K562 (cell line): ENCODE measurements at regions of chr3 and their contacts with region 1.

Region 1: GRCh38 chr3:8622873-8623691 is 21.5 kb downstream of the SSUH2 start:
- DNase-seq: peak; percentile 77 to 87 (median 85)
- ATAC-seq: peak; percentile 98
- H3K4me3 ChIP-seq: no peak overlapping the region
- H3K27ac ChIP-seq: no peak overlapping the region
- H3K4me1 ChIP-seq: peaks cover 0 to 3% of the 10 kb centered on the region in 2 experiments; a peak in 3 of 5 replicates
- H3K27me3 ChIP-seq: peaks cover 0 to 28% of the 10 kb centered on the region in 2 experiments; a peak in 2 of 5 replicates
- CTCF ChIP-seq: peak; percentile 88 to 92 (median 89)
- EP300 ChIP-seq: no peak
- POLR2A ChIP-seq: no peak
- RAD21 ChIP-seq: peak; percentile 88 to 91

Region 2: DNA sequence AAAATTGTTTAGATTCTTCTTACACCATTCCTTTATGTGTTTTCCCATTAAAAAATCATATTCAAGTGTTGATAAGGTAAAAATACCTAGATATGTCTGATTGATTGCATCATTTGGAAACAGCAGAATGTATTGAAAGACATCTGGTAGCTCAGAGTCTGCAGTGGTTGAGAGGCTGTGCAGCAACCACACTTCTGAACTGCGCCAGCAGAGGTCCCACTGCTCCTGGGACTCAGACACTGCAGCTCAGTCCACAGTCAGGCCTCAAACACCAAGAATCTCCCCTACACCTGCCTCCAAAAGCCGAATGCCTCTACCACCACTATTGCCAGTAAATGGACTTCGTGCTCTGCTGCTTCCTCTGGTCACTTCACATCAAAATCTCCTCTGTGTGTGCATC is 298.3 kb before region 1 on chr3:
- CTCF ChIA-PET with region 1: no interaction called
- POLR2A ChIA-PET with region 1: no interaction called
- in situ Hi-C with region 1: no loop called
- intact Hi-C with region 1: loop called (anchors 10 kb)
- DNase-seq: no peak
- ATAC-seq: peak; percentile 59; the same call in 2 of the 3 replicates
- H3K4me3 ChIP-seq: no peak overlapping the region
- H3K27ac ChIP-seq: no peak overlapping the region
- H3K4me1 ChIP-seq: no peaks in the 10 kb centered on the region
- H3K27me3 ChIP-seq: no peaks in the 10 kb centered on the region
- CTCF ChIP-seq: 0 out of 6 replicates have a peak, but pooled peaks of 1 of the 3 experiments have one; percentile 27
- EP300 ChIP-seq: no peak
- POLR2A ChIP-seq: no peak
- RAD21 ChIP-seq: peak; percentile 80 to 90

Region 3: GRCh38 chr3:8441969-8442559 is 181.0 kb before region 1 on chr3:
- CTCF ChIA-PET with region 1: interaction called, 12 read pairs
- POLR2A ChIA-PET with region 1: no interaction called
- in situ Hi-C with region 1: no loop called
- intact Hi-C with region 1: loop called (anchors 1 kb)
- DNase-seq: peak; percentile 36 to 53 (median 44)
- ATAC-seq: peak; percentile 78
- H3K4me3 ChIP-seq: no peak overlapping the region
- H3K27ac ChIP-seq: no peak overlapping the region
- H3K4me1 ChIP-seq: no peaks in the 10 kb centered on the region
- H3K27me3 ChIP-seq: peaks cover 0 to 4% of the 10 kb centered on the region in 2 experiments; a peak in 1 of 5 replicates
- CTCF ChIP-seq: peak; percentile 49 to 68 (median 68)
- EP300 ChIP-seq: no peak
- POLR2A ChIP-seq: no peak
- RAD21 ChIP-seq: peak; percentile 69 to 71

Region 4: GRCh38 chr3:8741581-8742261 is 118.6 kb after region 1 on chr3:
- CTCF ChIA-PET with region 1: no interaction called
- POLR2A ChIA-PET with region 1: no interaction called
- in situ Hi-C with region 1: no loop called
- intact Hi-C with region 1: no loop called
- DNase-seq: peak; percentile 66 to 78 (median 68)
- ATAC-seq: peak; percentile 93
- H3K4me3 ChIP-seq: no peak overlapping the region
- H3K27ac ChIP-seq: no peak overlapping the region
- H3K4me1 ChIP-seq: peaks cover 3 to 4% of the 10 kb centered on the region in 2 experiments; a peak in 3 of 5 replicates
- H3K27me3 ChIP-seq: peaks cover 7 to 40% of the 10 kb centered on the region in 2 experiments; a peak in 4 of 5 replicates
- CTCF ChIP-seq: no peak
- EP300 ChIP-seq: no peak
- POLR2A ChIP-seq: no peak
- RAD21 ChIP-seq: no peak

Region 5: DNA sequence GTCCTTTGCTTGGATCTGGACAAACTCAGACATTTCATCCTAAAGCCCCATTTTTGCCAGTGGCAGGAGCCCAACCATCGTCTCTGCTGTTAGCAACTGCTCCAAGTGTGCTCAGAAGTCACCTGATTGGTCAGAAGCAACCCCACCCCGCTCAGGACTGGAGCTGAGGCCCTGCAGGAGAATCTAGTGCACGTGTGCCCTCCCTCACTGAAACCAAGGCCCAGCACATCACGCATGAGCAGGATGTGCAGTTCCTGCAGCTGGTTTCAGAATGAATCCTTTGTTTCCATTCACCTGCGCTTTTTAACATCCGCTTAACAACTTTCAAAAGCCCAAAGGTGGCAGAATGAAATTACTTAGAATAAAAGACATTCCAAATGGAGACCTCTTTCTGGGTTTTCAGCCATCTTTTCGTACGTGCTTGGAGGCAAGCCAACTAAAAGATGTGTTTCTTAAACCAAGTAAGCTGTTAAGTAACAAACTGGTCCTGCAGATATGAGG is 545.2 kb after region 1 on chr3:
- CTCF ChIA-PET with region 1: no interaction called
- POLR2A ChIA-PET with region 1: no interaction called
- in situ Hi-C with region 1: no loop called
- intact Hi-C with region 1: no loop called
- DNase-seq: no peak
- ATAC-seq: peak; percentile 55; the same call in 2 of the 3 replicates
- H3K4me3 ChIP-seq: no peak overlapping the region
- H3K27ac ChIP-seq: no peak overlapping the region
- H3K4me1 ChIP-seq: no peaks in the 10 kb centered on the region
- H3K27me3 ChIP-seq: peaks cover 14 to 56% of the 10 kb centered on the region in 2 experiments; a peak in 3 of 5 replicates
- CTCF ChIP-seq: no peak
- EP300 ChIP-seq: no peak
- POLR2A ChIP-seq: no peak
- RAD21 ChIP-seq: no peak